AG04450 (cell line): ENCODE measurements at regions of chr4 and their contacts with region 1.

Region 1: GRCh38 chr4:38099908-38100407 is 139.8 kb downstream of the PTTG2 start:
- DNase-seq: peak; percentile 30
- H3K4me3 ChIP-seq: no peak overlapping the region
- H3K27ac ChIP-seq: peak overlapping the region; percentile 69
- H3K27me3 ChIP-seq: no peaks in the 10 kb centered on the region
- CTCF ChIP-seq: no peak

Region 2: GRCh38 chr4:37905531-37906169 is 194.3 kb before region 1 on chr4:
- CTCF ChIA-PET with region 1: no interaction called
- POLR2A ChIA-PET with region 1: no interaction called
- DNase-seq: no peak
- H3K4me3 ChIP-seq: no peak overlapping the region
- H3K27ac ChIP-seq: no peak overlapping the region
- H3K27me3 ChIP-seq: no peaks in the 10 kb centered on the region
- CTCF ChIP-seq: no peak

Region 3: GRCh38 chr4:38396845-38397547 is 297.0 kb after region 1 on chr4:
- CTCF ChIA-PET with region 1: no interaction called
- POLR2A ChIA-PET with region 1: interaction called, 12 read pairs
- DNase-seq: no peak
- H3K4me3 ChIP-seq: no peak overlapping the region
- H3K27ac ChIP-seq: no peak overlapping the region
- H3K27me3 ChIP-seq: no peaks in the 10 kb centered on the region
- CTCF ChIP-seq: no peak